Right ventricle myocardium inferior (tissue), 1 donor: ENCODE measurements at regions of chr19 and their contacts with region 1.

Region 1: DNA sequence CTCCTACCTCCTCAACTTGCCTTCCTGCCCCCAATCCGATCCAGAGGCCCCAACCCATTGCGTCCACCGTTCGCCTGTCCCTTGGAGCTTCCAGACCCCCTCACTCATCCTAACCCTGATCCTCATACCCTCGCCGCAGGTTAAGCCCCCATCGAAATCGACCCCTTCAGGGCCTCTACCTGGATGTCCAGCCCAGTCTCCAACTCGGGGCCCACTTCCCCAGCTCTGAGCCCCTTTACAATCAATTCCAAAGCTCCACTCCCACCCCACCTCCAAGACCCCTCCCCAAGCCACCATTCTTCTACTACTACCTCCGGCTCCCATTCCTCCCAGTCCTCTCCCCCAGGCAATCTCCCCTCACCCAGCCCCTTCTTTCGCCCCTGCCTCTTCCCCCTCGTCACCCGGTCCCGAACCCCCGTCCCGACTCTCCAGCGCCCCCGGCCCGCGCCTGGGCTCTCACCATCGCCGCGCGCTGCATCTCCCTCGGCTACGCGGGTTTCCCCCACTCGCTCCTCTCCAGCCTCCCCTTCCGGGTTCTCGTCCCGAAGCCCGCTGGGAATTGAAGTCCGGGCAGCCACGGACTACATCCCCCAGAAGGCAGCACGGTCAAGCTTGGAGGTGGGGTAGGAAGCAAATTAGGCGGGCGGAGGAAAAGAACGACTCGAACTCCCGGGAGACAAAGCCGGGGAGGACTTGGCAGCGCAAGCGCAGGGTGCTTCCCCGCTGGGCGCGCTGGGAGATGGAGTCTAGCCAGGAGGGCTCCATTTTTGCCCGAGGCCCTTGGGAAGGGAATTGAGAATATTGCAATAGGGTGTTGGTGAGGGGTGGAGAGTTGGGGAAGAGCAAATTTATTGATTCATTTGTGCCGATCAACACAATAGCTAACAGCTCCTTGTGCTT is at the start of gene FBXO46:
- DNase-seq: peak; percentile 96
- ATAC-seq: peak; percentile 98
- total RNA-seq, gene FBXO46: 13.1 TPM

Region 2: GRCh38 chr19:45692187-45693105 is 38.2 kb before region 1 on chr19 and contains the start of gene QPCTL:
- intact Hi-C with region 1: no loop called
- DNase-seq: peak; percentile 97
- ATAC-seq: peak; percentile 95
- total RNA-seq, gene QPCTL: 1.5 TPM

Region 3: GRCh38 chr19:45717166-45717982 is 13.3 kb before region 1 on chr19:
- intact Hi-C with region 1: loop called (anchors 1 kb)
- DNase-seq: peak; percentile 100
- ATAC-seq: peak; percentile 99

Region 4: GRCh38 chr19:45746866-45747265 is 16.2 kb after region 1 on chr19:
- intact Hi-C with region 1: no loop called
- DNase-seq: no peak
- ATAC-seq: no peak

Region 5: GRCh38 chr19:45764945-45765701 is 34.5 kb after region 1 on chr19:
- intact Hi-C with region 1: loop called (anchors 1 kb)
- DNase-seq: no peak
- ATAC-seq: peak; percentile 10

Region 6: GRCh38 chr19:46159418-46160232 is 429.0 kb after region 1 on chr19:
- intact Hi-C with region 1: no loop called
- DNase-seq: no peak
- ATAC-seq: no peak